PC-9 (cell line): ENCODE measurements at regions of chr4 and their contacts with region 1.

Region 1: GRCh38 chr4:11585506-11585905 is 156.8 kb upstream of the HS3ST1 start:
- DNase-seq: peak; percentile 52 to 78
- H3K4me3 ChIP-seq: no peak overlapping the region
- H3K27ac ChIP-seq: peak overlapping the region; percentile 43
- H3K4me1 ChIP-seq: peaks cover 30% of the 10 kb centered on the region
- H3K27me3 ChIP-seq: no peaks in the 10 kb centered on the region
- CTCF ChIP-seq: no peak

Region 2: GRCh38 chr4:11597506-11597905 is 12.0 kb after region 1 on chr4:
- CTCF ChIA-PET with region 1: no interaction called
- POLR2A ChIA-PET with region 1: no interaction called
- intact Hi-C with region 1: loop called (anchors 1 kb)
- DNase-seq: peak; percentile 17 to 71
- H3K4me3 ChIP-seq: no peak overlapping the region
- H3K27ac ChIP-seq: peak overlapping the region; percentile 46
- H3K4me1 ChIP-seq: no peaks in the 10 kb centered on the region
- H3K27me3 ChIP-seq: no peaks in the 10 kb centered on the region
- CTCF ChIP-seq: no peak